Ascending aorta (tissue), 2 donors: ENCODE measurements at regions of chr20 and their contacts with region 1.

Region 1: GRCh38 chr20:62352402-62353288 is 14.5 kb downstream of the LAMA5 start:
- DNase-seq: peak in 1 of 2 donors; percentile 94
- H3K4me3 ChIP-seq: peak overlapping the region; percentile 16 to 35
- H3K27ac ChIP-seq: peak overlapping the region; percentile 98 to 99
- H3K4me1 ChIP-seq: peaks cover 40 to 54% of the 10 kb centered on the region in 2 donors
- H3K27me3 ChIP-seq: no peaks in the 10 kb centered on the region
- CTCF ChIP-seq: peak; percentile 39 to 61 (median 52)

Region 2: GRCh38 chr20:62363920-62364842 is 11.5 kb after region 1 on chr20:
- intact Hi-C with region 1: loop called (anchors 1 kb)
- DNase-seq: peak in 1 of 2 donors; percentile 67
- H3K4me3 ChIP-seq: peak overlapping the region; percentile 94 to 98
- H3K27ac ChIP-seq: peak overlapping the region; percentile 91 to 98
- H3K4me1 ChIP-seq: peaks cover 54 to 75% of the 10 kb centered on the region in 2 donors
- H3K27me3 ChIP-seq: no peaks in the 10 kb centered on the region
- CTCF ChIP-seq: no peak

Region 3: DNA sequence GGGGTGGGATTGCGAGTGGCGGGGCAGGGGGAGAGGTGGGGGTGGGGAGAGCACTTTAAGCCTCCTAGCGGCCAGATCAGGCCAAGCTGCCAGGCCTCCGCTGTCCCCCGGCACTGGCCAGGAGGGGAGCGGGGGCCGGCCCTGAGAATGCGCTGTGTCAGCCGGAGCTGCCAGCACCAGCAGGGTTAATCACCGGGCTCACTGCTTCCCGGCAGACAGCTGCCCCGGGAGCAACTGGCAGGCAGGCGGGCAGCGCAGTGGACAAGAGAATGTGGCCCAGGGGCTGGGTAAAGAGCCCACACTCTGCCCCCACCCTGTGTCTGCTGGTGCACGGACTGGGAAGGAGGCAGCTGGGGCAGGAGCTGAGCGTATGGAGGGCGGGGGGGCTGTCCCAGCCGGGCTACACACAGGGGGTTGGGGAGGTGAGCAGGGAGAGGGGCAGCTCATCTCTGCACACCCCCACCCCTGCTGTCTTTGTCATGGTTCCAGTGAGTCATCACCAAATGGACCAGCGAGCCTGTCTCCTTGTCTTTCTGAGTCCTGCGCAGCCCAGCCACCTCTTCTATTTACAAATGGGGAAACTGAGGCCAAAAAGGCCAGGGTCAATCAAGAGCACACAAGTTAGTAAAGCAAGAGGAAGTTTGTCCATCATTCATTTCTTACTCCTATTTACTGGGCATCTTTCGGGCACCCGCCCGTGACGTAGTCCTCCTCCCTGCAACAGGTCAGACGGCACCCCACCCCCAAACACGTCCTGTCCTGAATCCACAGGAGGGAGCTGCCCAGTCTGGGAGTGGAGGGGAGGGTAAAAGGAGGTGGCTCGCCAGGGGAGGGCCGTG is 16.6 kb after region 1 on chr20:
- intact Hi-C with region 1: loop called (anchors 1 kb)
- DNase-seq: no peak
- H3K4me3 ChIP-seq: peak overlapping the region; percentile 94 to 98
- H3K27ac ChIP-seq: peak overlapping the region; percentile 78 to 98
- H3K4me1 ChIP-seq: peaks cover 40 to 64% of the 10 kb centered on the region in 2 donors
- H3K27me3 ChIP-seq: no peaks in the 10 kb centered on the region
- CTCF ChIP-seq: peak in 2 of 3 experiments; percentile 22 to 51

Region 4: GRCh38 chr20:62376112-62377063 is 23.7 kb after region 1 on chr20:
- intact Hi-C with region 1: loop called (anchors 1 kb)
- DNase-seq: no peak
- H3K4me3 ChIP-seq: no peak overlapping the region
- H3K27ac ChIP-seq: peak overlapping the region; percentile 46 to 71
- H3K4me1 ChIP-seq: peaks cover 16 to 48% of the 10 kb centered on the region in 2 donors
- H3K27me3 ChIP-seq: no peaks in the 10 kb centered on the region
- CTCF ChIP-seq: peak; percentile 65 to 84 (median 71)